Naive thymus-derived CD4-positive, alpha-beta T cell (primary cell): ENCODE measurements at regions of chr6 and their contacts with region 1.

Region 1: GRCh38 chr6:131199568-131200272 is 64.5 kb downstream of the AKAP7 start:
- DNase-seq: peak; percentile 37 to 92 (median 88)
- ATAC-seq: peak; percentile 99
- H3K4me3 ChIP-seq: peak overlapping the region; percentile 44
- H3K4me3 Mint-ChIP-seq: peak overlapping the region; percentile 69 to 87 (median 82)
- H3K27ac ChIP-seq: peak overlapping the region; percentile 79
- H3K27ac Mint-ChIP-seq: peak overlapping the region; percentile 91 to 99 (median 97)
- H3K4me1 ChIP-seq: peaks cover 45 to 57% of the 10 kb centered on the region in 2 donors
- H3K4me1 Mint-ChIP-seq: peaks cover 37 to 71% (median 61%) of the 10 kb centered on the region in 7 donors
- H3K27me3 ChIP-seq: no peaks in the 10 kb centered on the region
- H3K27me3 Mint-ChIP-seq: no peaks in the 10 kb centered on the region

Region 2: DNA sequence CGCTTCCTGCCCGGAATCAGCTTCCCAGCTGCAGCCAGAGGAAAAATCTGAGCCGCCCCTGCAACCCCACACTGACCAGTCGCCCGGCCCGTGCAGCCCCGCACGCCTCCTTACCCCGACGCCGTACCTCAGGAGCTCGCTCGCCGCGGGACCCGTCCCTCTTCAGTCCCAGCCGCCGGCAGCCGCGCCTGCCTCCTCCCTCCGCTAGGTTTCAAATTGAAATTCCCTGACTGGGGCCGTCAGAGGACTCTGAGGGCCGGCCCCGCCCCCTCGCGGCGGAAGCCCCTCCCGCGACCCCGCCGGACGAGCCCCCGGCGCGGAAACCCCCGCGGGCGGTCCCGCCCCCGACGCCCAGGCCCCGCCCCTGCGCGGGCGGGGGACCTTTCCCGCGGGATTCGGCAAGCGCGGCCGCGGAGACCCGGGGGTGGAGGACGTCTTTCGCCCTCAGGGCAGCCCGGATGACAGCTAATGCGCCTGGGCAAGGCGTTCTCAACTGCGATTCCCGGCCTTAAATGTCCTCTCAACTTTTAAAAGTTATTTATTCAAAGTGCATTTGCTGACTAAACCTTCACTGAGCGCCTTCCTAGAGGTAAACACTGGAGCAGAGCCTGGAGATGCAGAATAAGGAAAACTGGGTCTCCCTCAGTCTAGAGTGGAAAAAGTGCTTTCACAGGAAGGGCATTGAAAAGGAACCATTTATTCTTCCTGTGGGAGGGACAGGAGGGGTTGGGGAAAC is 136.5 kb before region 1 on chr6 and contains the start of gene EPB41L2:
- CTCF ChIA-PET with region 1: no interaction called
- POLR2A ChIA-PET with region 1: no interaction called
- intact Hi-C with region 1: loop called in 1 of 2 experiments (anchors 5 kb)
- DNase-seq: peak; percentile 63 to 87 (median 73)
- ATAC-seq: peak; percentile 94
- H3K4me3 ChIP-seq: peak within 1 kb of the TSS; percentile 63
- H3K4me3 Mint-ChIP-seq: peak within 1 kb of the TSS; percentile 83 to 93 (median 90)
- H3K27ac ChIP-seq: peak within 1 kb of the TSS; percentile 67
- H3K27ac Mint-ChIP-seq: peak within 1 kb of the TSS; percentile 20 to 92 (median 77)
- H3K4me1 ChIP-seq: peaks cover 0 to 6% of the 10 kb centered on the region in 2 donors
- H3K4me1 Mint-ChIP-seq: peaks cover 8 to 27% (median 25%) of the 10 kb centered on the region in 7 donors
- H3K27me3 ChIP-seq: no peaks in the 10 kb centered on the region
- H3K27me3 Mint-ChIP-seq: peaks cover 0 to 35% (median 0%) of the 10 kb centered on the region in 5 donors
- total RNA-seq, gene EPB41L2: 10.3 to 26.9 (median 20.9) TPM

Region 3: GRCh38 chr6:131213501-131213990 is 13.8 kb after region 1 on chr6:
- CTCF ChIA-PET with region 1: interaction called, 4 read pairs
- POLR2A ChIA-PET with region 1: no interaction called
- intact Hi-C with region 1: loop called in 1 of 2 experiments (anchors 1 kb)
- DNase-seq: no peak
- ATAC-seq: peak; percentile 37
- H3K4me3 ChIP-seq: no peak overlapping the region
- H3K4me3 Mint-ChIP-seq: peak overlapping the region in 9 of 10 donors; percentile 4 to 66 (median 22)
- H3K27ac ChIP-seq: no peak overlapping the region
- H3K27ac Mint-ChIP-seq: peak overlapping the region in 8 of 9 donors; percentile 3 to 78 (median 49)
- H3K4me1 ChIP-seq: peaks cover 0 to 17% of the 10 kb centered on the region in 2 donors
- H3K4me1 Mint-ChIP-seq: peaks cover 18 to 71% (median 57%) of the 10 kb centered on the region in 7 donors
- H3K27me3 ChIP-seq: no peaks in the 10 kb centered on the region
- H3K27me3 Mint-ChIP-seq: no peaks in the 10 kb centered on the region

Region 4: GRCh38 chr6:131303338-131303954 is 103.7 kb after region 1 on chr6:
- CTCF ChIA-PET with region 1: interaction called, 3 read pairs
- POLR2A ChIA-PET with region 1: no interaction called
- intact Hi-C with region 1: loop called in 1 of 2 experiments (anchors 1 kb)
- DNase-seq: no peak
- ATAC-seq: no peak
- H3K4me3 ChIP-seq: no peak overlapping the region
- H3K4me3 Mint-ChIP-seq: no peak overlapping the region
- H3K27ac ChIP-seq: no peak overlapping the region
- H3K27ac Mint-ChIP-seq: peak overlapping the region in 6 of 9 donors; percentile 2 to 51 (median 28)
- H3K4me1 ChIP-seq: peaks cover 0 to 10% of the 10 kb centered on the region in 2 donors
- H3K4me1 Mint-ChIP-seq: peaks cover 0 to 40% (median 24%) of the 10 kb centered on the region in 7 donors
- H3K27me3 ChIP-seq: no peaks in the 10 kb centered on the region
- H3K27me3 Mint-ChIP-seq: no peaks in the 10 kb centered on the region

Region 5: GRCh38 chr6:131460614-131461000 is 260.9 kb after region 1 on chr6:
- CTCF ChIA-PET with region 1: no interaction called
- POLR2A ChIA-PET with region 1: no interaction called
- intact Hi-C with region 1: loop called (anchors 1 kb)
- DNase-seq: no peak
- ATAC-seq: no peak
- H3K4me3 ChIP-seq: no peak overlapping the region
- H3K4me3 Mint-ChIP-seq: no peak overlapping the region
- H3K27ac ChIP-seq: no peak overlapping the region
- H3K27ac Mint-ChIP-seq: peak overlapping the region in 2 of 9 donors; percentile 51 to 58
- H3K4me1 ChIP-seq: peaks cover 0 to 4% of the 10 kb centered on the region in 2 donors
- H3K4me1 Mint-ChIP-seq: peaks cover 0 to 10% (median 6%) of the 10 kb centered on the region in 7 donors
- H3K27me3 ChIP-seq: no peaks in the 10 kb centered on the region
- H3K27me3 Mint-ChIP-seq: no peaks in the 10 kb centered on the region

Region 6: GRCh38 chr6:131597446-131597845 is 397.7 kb after region 1 on chr6:
- CTCF ChIA-PET with region 1: interaction called, 4 read pairs
- POLR2A ChIA-PET with region 1: no interaction called
- intact Hi-C with region 1: loop called in 1 of 2 experiments (anchors 1 kb)
- DNase-seq: peak in 5 of 9 donors; percentile 8 to 30 (median 17)
- ATAC-seq: no peak
- H3K4me3 ChIP-seq: no peak overlapping the region
- H3K4me3 Mint-ChIP-seq: no peak overlapping the region
- H3K27ac ChIP-seq: no peak overlapping the region
- H3K27ac Mint-ChIP-seq: peak overlapping the region in 1 of 9 donors; percentile 51
- H3K4me1 ChIP-seq: no peaks in the 10 kb centered on the region
- H3K4me1 Mint-ChIP-seq: peaks cover 0 to 4% (median 0%) of the 10 kb centered on the region in 7 donors
- H3K27me3 ChIP-seq: no peaks in the 10 kb centered on the region
- H3K27me3 Mint-ChIP-seq: no peaks in the 10 kb centered on the region